ENCODE measurements at regions of chr5 and their contacts with region 1.

Region 1: GRCh38 chr5:19018822-19019221 is 969.2 kb downstream of the CDH18 start:
- DNase-seq: no peak
- ATAC-seq: no peak
- H3K4me3 ChIP-seq: no peak overlapping the region
- H3K27ac ChIP-seq: no peak overlapping the region
- H3K4me1 ChIP-seq: no peaks in the 10 kb centered on the region
- H3K27me3 ChIP-seq: no peaks in the 10 kb centered on the region
- CTCF ChIP-seq: no peak

Region 2: GRCh38 chr5:19285286-19285685 is 266.5 kb after region 1 on chr5:
- intact Hi-C with region 1: loop called in 1 of 2 experiments (anchors 2 kb)
- DNase-seq: no peak
- ATAC-seq: no peak
- H3K4me3 ChIP-seq: no peak overlapping the region
- H3K27ac ChIP-seq: no peak overlapping the region
- H3K4me1 ChIP-seq: no peaks in the 10 kb centered on the region
- H3K27me3 ChIP-seq: no peaks in the 10 kb centered on the region
- CTCF ChIP-seq: no peak